ENCODE measurements at regions of chr15 and their contacts with region 1.

Region 1: GRCh38 chr15:41585127-41586047 is 26.4 kb downstream of the TYRO3 start:
- DNase-seq: peak; percentile 45
- ATAC-seq: peak; percentile 53
- H3K4me3 Mint-ChIP-seq: peak overlapping the region; percentile 56
- H3K27ac Mint-ChIP-seq: no peak overlapping the region
- H3K4me1 Mint-ChIP-seq: peaks cover 6% of the 10 kb centered on the region
- H3K27me3 Mint-ChIP-seq: peaks cover 30% of the 10 kb centered on the region
- CTCF ChIP-seq: peak; percentile 29

Region 2: DNA sequence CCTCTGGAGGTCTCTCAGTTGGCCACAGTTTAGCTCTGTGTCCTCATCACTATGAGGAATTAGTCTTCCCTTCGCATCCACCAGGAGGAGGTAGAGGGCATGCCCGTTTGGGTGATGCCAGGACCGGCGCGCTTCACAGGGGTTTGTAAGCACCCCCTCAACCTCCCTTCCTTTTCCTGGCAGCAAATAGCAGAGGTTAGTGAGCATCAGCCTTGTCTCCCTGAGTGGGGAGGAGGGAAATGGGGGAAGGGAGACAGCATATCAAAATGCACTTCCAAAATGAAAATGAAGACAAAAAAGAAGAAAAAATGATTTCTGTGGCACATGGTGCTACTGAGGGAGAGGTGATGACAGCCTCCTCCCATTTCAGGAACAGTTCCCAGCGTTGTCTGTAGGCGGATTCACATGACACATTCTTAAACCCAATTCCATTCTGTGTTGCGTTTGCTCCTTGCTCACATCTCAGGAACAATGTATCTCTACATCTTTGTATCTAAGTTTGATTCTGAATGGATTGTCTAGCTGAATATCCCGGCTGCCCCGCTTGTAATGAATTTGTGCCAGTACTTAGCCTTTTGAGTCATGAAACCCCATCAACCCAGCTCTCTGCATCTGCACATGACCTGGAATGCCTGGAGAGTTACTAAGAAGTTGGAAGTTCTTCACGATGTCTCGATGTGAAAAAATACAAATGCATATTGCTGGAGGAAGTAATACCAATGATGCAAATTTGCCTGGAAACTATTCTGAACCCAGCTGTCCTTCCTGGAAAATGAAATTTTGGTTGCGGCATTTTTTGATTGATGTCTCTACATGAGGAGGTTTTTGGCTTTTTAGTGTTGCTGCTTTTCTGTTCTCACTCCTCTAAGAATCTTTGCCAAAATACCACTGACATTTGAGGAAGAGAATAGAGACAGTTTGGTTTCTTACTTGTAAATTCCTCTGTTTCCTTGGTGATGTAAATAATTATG is 18.8 kb after region 1 on chr15:
- CTCF ChIA-PET with region 1: interaction called, 12 read pairs
- POLR2A ChIA-PET with region 1: no interaction called
- intact Hi-C with region 1: no loop called
- DNase-seq: peak; percentile 69
- ATAC-seq: peak; percentile 97
- H3K4me3 Mint-ChIP-seq: peak overlapping the region; percentile 48
- H3K27ac Mint-ChIP-seq: no peak overlapping the region
- H3K4me1 Mint-ChIP-seq: peaks cover 10% of the 10 kb centered on the region
- H3K27me3 Mint-ChIP-seq: peaks cover 7% of the 10 kb centered on the region
- CTCF ChIP-seq: peak; percentile 79